ENCODE measurements at regions of chr6 and their contacts with region 1.

Region 1: DNA sequence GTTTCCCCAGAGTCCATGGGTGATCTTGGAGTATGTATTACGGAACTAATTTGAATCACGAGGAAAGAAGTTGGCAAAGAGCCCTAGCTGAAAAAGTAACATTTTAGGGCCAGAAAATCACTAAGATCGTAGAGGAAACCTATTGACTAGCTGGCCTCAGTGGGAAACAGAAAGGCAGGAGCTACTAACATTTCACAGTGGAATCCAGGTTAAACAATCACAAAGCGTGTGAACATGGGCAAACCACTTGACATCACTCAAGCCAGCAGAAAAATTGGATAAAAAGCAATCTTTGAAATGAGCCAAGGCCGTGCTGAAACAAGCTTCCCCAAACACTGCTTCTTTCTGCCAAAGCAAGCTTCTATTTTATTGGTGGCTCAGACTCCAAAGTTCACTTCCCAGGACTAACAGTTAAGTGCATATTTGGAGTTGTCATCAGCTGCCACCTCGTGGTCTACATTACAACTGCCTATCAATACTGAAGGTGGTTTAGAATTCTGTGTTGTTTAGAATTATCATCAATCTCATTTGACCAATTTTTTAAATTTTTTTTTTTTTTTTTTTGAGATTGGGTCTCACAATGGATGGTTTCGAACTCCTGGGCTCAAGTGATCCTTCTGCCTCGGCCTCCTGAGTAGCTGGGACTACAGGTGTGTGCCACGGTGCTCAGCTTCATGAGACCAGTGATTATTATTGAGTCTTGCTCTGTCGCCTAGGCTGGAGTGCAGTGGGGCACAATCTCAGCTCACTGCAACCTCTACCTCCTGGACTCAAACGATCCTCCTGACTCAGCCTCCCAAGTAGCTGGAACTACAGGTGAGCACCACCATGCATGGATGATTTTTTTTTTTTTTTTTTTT is 10.6 kb downstream of the RPS10 start:
- DNase-seq: peak; percentile 51 to 57
- ATAC-seq: peak; percentile 94 to 96
- H3K4me3 ChIP-seq: no peak overlapping the region
- H3K27ac ChIP-seq: peak overlapping the region; percentile 41 to 59 (median 54)
- H3K4me1 ChIP-seq: peaks cover 7 to 10% of the 10 kb centered on the region in 2 donors
- H3K27me3 ChIP-seq: no peaks in the 10 kb centered on the region
- CTCF ChIP-seq: peak; percentile 76 to 84 (median 78)
- POLR2A ChIP-seq: no peak

Region 2: GRCh38 chr6:34189806-34190503 is 225.3 kb before region 1 on chr6:
- in situ Hi-C with region 1: loop called in 3 of 4 experiments (anchors 5 to 10 kb)
- intact Hi-C with region 1: no loop called
- DNase-seq: no peak
- ATAC-seq: no peak
- H3K4me3 ChIP-seq: no peak overlapping the region
- H3K27ac ChIP-seq: no peak overlapping the region
- H3K4me1 ChIP-seq: no peaks in the 10 kb centered on the region
- H3K27me3 ChIP-seq: no peaks in the 10 kb centered on the region
- CTCF ChIP-seq: no peak
- POLR2A ChIP-seq: no peak

Region 3: GRCh38 chr6:34196126-34196830 is 219.0 kb before region 1 on chr6:
- in situ Hi-C with region 1: loop called in 3 of 4 experiments (anchors 5 to 10 kb)
- intact Hi-C with region 1: loop called (anchors 1 kb)
- DNase-seq: peak; percentile 62 to 76
- ATAC-seq: peak; percentile 95 to 98
- H3K4me3 ChIP-seq: peak overlapping the region; percentile 56 to 87 (median 64)
- H3K27ac ChIP-seq: no peak overlapping the region
- H3K4me1 ChIP-seq: peaks cover 3 to 5% of the 10 kb centered on the region in 2 donors
- H3K27me3 ChIP-seq: no peaks in the 10 kb centered on the region
- CTCF ChIP-seq: peak; percentile 94 to 98 (median 98)
- POLR2A ChIP-seq: no peak

Region 4: GRCh38 chr6:34508425-34508824 is 93.2 kb after region 1 on chr6:
- in situ Hi-C with region 1: no loop called
- intact Hi-C with region 1: no loop called
- DNase-seq: no peak
- ATAC-seq: no peak
- H3K4me3 ChIP-seq: no peak overlapping the region
- H3K27ac ChIP-seq: no peak overlapping the region
- H3K4me1 ChIP-seq: no peaks in the 10 kb centered on the region
- H3K27me3 ChIP-seq: no peaks in the 10 kb centered on the region
- CTCF ChIP-seq: no peak
- POLR2A ChIP-seq: no peak

Region 5: GRCh38 chr6:34602318-34603111 is 187.3 kb after region 1 on chr6:
- in situ Hi-C with region 1: no loop called
- intact Hi-C with region 1: no loop called
- DNase-seq: peak; percentile 63 to 76
- ATAC-seq: peak; percentile 72 to 73
- H3K4me3 ChIP-seq: no peak overlapping the region
- H3K27ac ChIP-seq: peak overlapping the region; percentile 65 to 92 (median 80)
- H3K4me1 ChIP-seq: peaks cover 68 to 71% of the 10 kb centered on the region in 2 donors
- H3K27me3 ChIP-seq: no peaks in the 10 kb centered on the region
- CTCF ChIP-seq: no peak
- POLR2A ChIP-seq: no peak

Region 6: DNA sequence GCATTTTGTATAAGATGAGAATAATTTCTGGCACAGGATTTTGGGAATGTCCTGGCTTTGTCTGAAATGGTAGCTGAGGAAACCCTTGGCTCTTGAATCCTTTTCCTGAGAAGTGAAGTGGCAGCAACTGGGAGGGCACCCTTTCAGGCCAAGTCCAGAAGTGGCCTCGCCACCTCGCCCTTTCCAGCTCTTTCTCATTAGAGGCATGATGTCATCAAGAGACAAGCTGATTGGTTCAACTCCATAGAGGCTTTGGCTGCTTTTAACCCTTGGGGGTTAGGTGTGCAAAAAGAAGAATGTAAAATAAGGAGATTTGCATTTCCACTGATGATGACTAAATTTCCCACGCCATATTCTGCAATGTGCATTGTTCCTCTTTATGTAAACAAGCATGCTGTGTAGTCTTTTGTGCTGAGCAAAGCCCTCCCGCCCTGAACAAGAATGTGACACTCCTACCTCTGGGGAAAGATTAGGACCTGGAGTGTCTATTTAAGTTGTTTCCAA is 609.4 kb after region 1 on chr6:
- in situ Hi-C with region 1: no loop called
- intact Hi-C with region 1: no loop called
- DNase-seq: no peak
- ATAC-seq: peak; percentile 61 to 76
- H3K4me3 ChIP-seq: no peak overlapping the region
- H3K27ac ChIP-seq: peak overlapping the region; percentile 44 to 68 (median 57)
- H3K4me1 ChIP-seq: peaks cover 63 to 64% of the 10 kb centered on the region in 2 donors
- H3K27me3 ChIP-seq: no peaks in the 10 kb centered on the region
- CTCF ChIP-seq: no peak
- POLR2A ChIP-seq: no peak